Posterior vena cava (tissue), 2 donors: ENCODE measurements at regions of chr12 and their contacts with region 1.

Region 1: DNA sequence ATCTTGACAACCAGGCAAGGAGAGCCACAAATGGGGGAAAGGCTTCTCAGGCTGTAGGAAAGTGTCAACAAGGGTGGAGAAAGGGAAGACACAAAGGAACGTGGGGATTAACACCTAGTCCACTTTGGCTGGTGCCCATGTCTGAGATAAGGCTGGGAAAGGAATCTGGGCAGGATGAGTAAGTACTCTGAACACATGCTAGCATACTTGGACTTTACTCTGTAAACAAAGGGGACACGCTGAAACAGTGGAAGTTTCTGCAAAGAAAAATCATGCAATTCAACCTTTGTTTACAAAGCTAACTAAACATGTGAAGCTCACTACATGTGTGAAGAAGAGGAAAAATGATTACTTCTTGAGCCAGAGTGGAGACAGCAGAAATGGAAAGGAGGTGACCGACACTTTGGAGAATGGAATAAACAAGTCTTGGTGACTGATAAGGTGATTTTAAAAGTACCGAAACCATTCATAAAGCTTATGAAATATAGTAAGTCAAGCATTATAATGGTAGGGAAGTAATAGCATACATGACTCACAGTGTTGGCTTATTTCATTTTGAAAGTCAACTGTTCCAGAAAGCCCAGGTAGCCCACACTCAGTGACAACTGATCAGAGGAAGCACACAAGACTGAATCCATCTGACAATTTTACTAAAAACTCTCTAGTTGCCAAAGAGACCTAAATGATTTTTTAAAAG is 13.2 kb downstream of the CPNE8 start:
- DNase-seq: no peak

Region 2: GRCh38 chr12:38838056-38838850 is 54.0 kb before region 1 on chr12:
- intact Hi-C with region 1: loop called in 1 of 2 experiments (anchors 10 kb)
- DNase-seq: no peak